Activated B cell treated with CpG ODN at 0.5 μM for 24 hours (primary cell): ENCODE measurements at regions of chr2 and their contacts with region 1.

Region 1: GRCh38 chr2:43226558-43226954 is at the start of gene ZFP36L2:
- DNase-seq: peak; percentile 93
- ATAC-seq: peak; percentile 71
- H3K4me3 Mint-ChIP-seq: peak within 1 kb of the TSS; percentile 95
- H3K27ac Mint-ChIP-seq: peak within 1 kb of the TSS; percentile 95
- H3K4me1 Mint-ChIP-seq: peaks cover 56% of the 10 kb centered on the region
- H3K27me3 Mint-ChIP-seq: peaks cover 2% of the 10 kb centered on the region
- CTCF ChIP-seq: no peak
- total RNA-seq, gene ZFP36L2: 56.7 and 62.1 TPM in 2 replicates

Region 2: GRCh38 chr2:42286268-42286946 is 940.1 kb before region 1 on chr2:
- CTCF ChIA-PET with region 1: no interaction called
- POLR2A ChIA-PET with region 1: no interaction called
- intact Hi-C with region 1: no loop called
- DNase-seq: no peak
- ATAC-seq: no peak
- H3K4me3 Mint-ChIP-seq: no peak overlapping the region
- H3K27ac Mint-ChIP-seq: no peak overlapping the region
- H3K4me1 Mint-ChIP-seq: no peaks in the 10 kb centered on the region
- H3K27me3 Mint-ChIP-seq: no peaks in the 10 kb centered on the region
- CTCF ChIP-seq: no peak

Region 3: DNA sequence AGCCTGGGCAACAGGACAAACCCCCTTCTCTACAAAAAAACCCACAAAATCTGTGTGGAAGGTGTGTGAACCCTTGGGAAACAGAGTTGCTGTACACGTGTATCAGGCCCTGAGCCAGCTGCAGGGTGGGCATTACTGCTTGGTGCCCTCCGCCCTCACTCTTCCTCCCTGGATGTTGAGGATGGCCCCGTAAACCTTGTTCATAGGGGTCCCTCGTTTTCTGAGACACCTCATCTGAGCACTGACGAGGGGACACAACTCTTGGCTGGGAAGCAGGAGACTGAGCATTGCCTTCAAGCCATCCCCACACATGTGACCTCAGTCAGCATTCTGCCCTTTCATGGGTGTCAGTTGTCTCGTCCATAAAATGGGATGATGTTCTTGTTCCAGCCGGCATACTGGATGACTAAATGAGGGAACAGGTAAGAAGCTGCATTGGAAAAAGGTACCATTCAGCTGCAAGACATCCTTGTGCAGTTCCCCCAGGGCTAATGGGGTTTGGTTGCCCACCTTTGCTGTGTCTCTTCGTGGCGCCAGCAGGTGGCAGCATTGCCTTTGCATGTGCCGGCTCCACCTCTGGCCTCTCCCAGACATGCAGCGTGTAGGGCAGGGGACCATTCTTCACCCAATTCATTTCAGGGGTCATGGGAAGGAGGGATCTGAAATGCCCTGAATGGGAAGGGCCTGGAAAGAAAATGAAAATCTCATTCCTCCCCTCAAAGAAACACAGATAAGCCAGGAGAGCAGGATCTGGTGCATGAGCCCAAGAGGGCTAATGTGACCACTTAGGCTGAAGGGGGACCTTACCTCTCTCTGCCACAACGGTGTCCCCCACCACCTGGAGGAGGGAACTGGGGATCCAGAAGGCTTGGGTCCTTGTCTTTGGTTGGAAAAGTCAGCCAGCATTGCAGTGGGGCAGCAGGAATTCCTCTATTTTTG is 397.8 kb before region 1 on chr2:
- CTCF ChIA-PET with region 1: no interaction called
- POLR2A ChIA-PET with region 1: no interaction called
- intact Hi-C with region 1: loop called (anchors 2 kb)
- DNase-seq: peak; percentile 52
- ATAC-seq: peak; percentile 88
- H3K4me3 Mint-ChIP-seq: no peak overlapping the region
- H3K27ac Mint-ChIP-seq: no peak overlapping the region
- H3K4me1 Mint-ChIP-seq: peaks cover 14% of the 10 kb centered on the region
- H3K27me3 Mint-ChIP-seq: no peaks in the 10 kb centered on the region
- CTCF ChIP-seq: peak; percentile 65

Region 4: DNA sequence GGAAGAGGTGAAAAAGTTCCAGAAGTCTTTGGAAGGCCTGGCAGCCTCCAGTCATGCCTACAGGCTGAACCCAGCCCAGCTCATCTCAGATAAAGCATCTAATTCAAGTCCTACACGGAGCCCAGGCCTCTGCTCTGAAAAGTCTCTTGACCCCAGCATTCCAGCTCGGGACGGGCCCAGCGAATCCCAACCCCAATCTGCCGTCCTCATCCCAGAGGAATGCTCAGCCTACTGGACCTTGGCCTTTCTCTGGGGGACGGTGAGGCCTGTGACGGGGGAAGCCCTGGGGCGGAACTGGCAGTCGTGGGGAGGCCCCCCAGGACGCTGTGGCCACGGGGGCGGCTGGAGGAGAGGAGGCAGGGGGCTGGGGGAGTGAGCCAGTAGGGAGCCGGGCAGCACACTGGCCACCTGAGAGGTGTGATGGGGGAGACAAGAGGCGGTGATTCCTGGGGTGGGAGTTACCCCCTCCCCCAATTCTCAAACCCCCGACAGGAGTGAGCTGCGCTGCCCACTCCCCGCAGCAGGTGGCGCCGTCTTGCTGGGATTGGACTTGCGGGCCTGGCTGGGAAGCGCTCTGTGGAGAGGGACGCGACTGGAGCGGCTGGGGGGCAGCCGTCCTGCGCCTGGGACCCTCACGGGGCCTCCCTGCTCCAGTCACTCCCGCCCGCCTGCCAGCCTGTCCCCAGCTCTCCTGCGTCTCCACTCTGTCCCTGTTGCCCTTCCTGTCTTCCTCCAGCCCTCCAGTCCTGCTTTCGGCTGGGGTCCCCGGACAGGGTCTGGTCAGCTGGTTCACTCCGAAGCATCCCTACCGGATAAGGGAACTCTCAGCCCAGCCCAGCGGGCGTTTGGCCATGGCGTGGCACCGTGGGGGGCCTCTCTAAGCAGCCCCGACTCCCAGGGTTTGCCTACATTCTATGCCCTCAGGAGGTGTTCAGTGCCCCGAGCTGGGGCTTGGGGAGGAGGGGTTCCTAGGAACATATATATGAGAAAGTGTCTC is 251.5 kb before region 1 on chr2:
- CTCF ChIA-PET with region 1: interaction called, 37 read pairs
- POLR2A ChIA-PET with region 1: interaction called, 4 read pairs
- intact Hi-C with region 1: loop called (anchors 1 kb)
- DNase-seq: peak; percentile 54
- ATAC-seq: peak; percentile 76
- H3K4me3 Mint-ChIP-seq: no peak overlapping the region
- H3K27ac Mint-ChIP-seq: no peak overlapping the region
- H3K4me1 Mint-ChIP-seq: peaks cover 35% of the 10 kb centered on the region
- H3K27me3 Mint-ChIP-seq: peaks cover 3% of the 10 kb centered on the region
- CTCF ChIP-seq: no peak

Region 5: GRCh38 chr2:43139996-43140621 is 86.4 kb before region 1 on chr2:
- CTCF ChIA-PET with region 1: interaction called, 336 read pairs
- POLR2A ChIA-PET with region 1: interaction called, 561 read pairs
- intact Hi-C with region 1: no loop called
- DNase-seq: no peak
- ATAC-seq: no peak
- H3K4me3 Mint-ChIP-seq: no peak overlapping the region
- H3K27ac Mint-ChIP-seq: peak overlapping the region; percentile 0
- H3K4me1 Mint-ChIP-seq: peaks cover 40% of the 10 kb centered on the region
- H3K27me3 Mint-ChIP-seq: no peaks in the 10 kb centered on the region
- CTCF ChIP-seq: no peak

Region 6: GRCh38 chr2:43178602-43179542 is 47.7 kb before region 1 on chr2:
- CTCF ChIA-PET with region 1: interaction called, 4 read pairs
- POLR2A ChIA-PET with region 1: interaction called, 344 read pairs
- intact Hi-C with region 1: loop called (anchors 1 kb)
- DNase-seq: no peak
- ATAC-seq: no peak
- H3K4me3 Mint-ChIP-seq: no peak overlapping the region
- H3K27ac Mint-ChIP-seq: no peak overlapping the region
- H3K4me1 Mint-ChIP-seq: peaks cover 53% of the 10 kb centered on the region
- H3K27me3 Mint-ChIP-seq: no peaks in the 10 kb centered on the region
- CTCF ChIP-seq: no peak

Region 7: GRCh38 chr2:43305517-43305916 is 79.0 kb after region 1 on chr2:
- CTCF ChIA-PET with region 1: no interaction called
- POLR2A ChIA-PET with region 1: no interaction called
- intact Hi-C with region 1: no loop called
- DNase-seq: no peak
- ATAC-seq: no peak
- H3K4me3 Mint-ChIP-seq: no peak overlapping the region
- H3K27ac Mint-ChIP-seq: no peak overlapping the region
- H3K4me1 Mint-ChIP-seq: no peaks in the 10 kb centered on the region
- H3K27me3 Mint-ChIP-seq: no peaks in the 10 kb centered on the region
- CTCF ChIP-seq: no peak

Region 8: GRCh38 chr2:43484323-43484930 is 257.9 kb after region 1 on chr2:
- CTCF ChIA-PET with region 1: interaction called, 57 read pairs
- POLR2A ChIA-PET with region 1: interaction called, 22 read pairs
- intact Hi-C with region 1: loop called (anchors 1 kb)
- DNase-seq: no peak
- ATAC-seq: no peak
- H3K4me3 Mint-ChIP-seq: no peak overlapping the region
- H3K27ac Mint-ChIP-seq: no peak overlapping the region
- H3K4me1 Mint-ChIP-seq: peaks cover 29% of the 10 kb centered on the region
- H3K27me3 Mint-ChIP-seq: no peaks in the 10 kb centered on the region
- CTCF ChIP-seq: peak; percentile 45

Region 9: GRCh38 chr2:43637030-43637803 is 410.7 kb after region 1 on chr2 and contains the start of gene PLEKHH2:
- CTCF ChIA-PET with region 1: no interaction called
- POLR2A ChIA-PET with region 1: no interaction called
- intact Hi-C with region 1: loop called (anchors 1 kb)
- DNase-seq: peak; percentile 73
- ATAC-seq: peak; percentile 100
- H3K4me3 Mint-ChIP-seq: peak within 1 kb of the TSS; percentile 81
- H3K27ac Mint-ChIP-seq: no peak within 1 kb of the TSS
- H3K4me1 Mint-ChIP-seq: peaks cover 13% of the 10 kb centered on the region
- H3K27me3 Mint-ChIP-seq: peaks cover 40% of the 10 kb centered on the region
- CTCF ChIP-seq: no peak
- total RNA-seq, gene PLEKHH2: 0.07 and 0.11 TPM in 2 replicates